Esophagus squamous epithelium (tissue), 5 donors: ENCODE measurements at regions of chr4 and their contacts with region 1.

Region 1: GRCh38 chr4:73258686-73259570 is at the start of gene ANKRD17:
- DNase-seq: peak; percentile 65
- H3K4me3 ChIP-seq: peak within 1 kb of the TSS; percentile 77 to 96 (median 90)
- H3K27ac ChIP-seq: peak within 1 kb of the TSS; percentile 95 to 99 (median 97)
- H3K4me1 ChIP-seq: peaks cover 6 to 55% (median 39%) of the 10 kb centered on the region in 3 donors
- H3K27me3 ChIP-seq: no peaks in the 10 kb centered on the region
- CTCF ChIP-seq: peak in 4 of 6 experiments; percentile 25 to 58 (median 44)
- POLR2A ChIP-seq: peak in 3 of 4 donors; percentile 49 to 85 (median 79)
- total RNA-seq, gene ANKRD17: 31.3 to 55.5 (median 47.5) TPM

Region 2: GRCh38 chr4:73069338-73070073 is 189.4 kb before region 1 on chr4 and contains the start of gene COX18:
- intact Hi-C with region 1: loop called (anchors 10 kb)
- DNase-seq: peak; percentile 81
- H3K4me3 ChIP-seq: peak within 1 kb of the TSS; percentile 57 to 98 (median 78)
- H3K27ac ChIP-seq: peak within 1 kb of the TSS; percentile 92 to 98 (median 96)
- H3K4me1 ChIP-seq: peaks cover 0 to 31% (median 5%) of the 10 kb centered on the region in 3 donors
- H3K27me3 ChIP-seq: no peaks in the 10 kb centered on the region
- CTCF ChIP-seq: peak in 1 of 6 experiments; percentile 8
- POLR2A ChIP-seq: peak in 3 of 4 donors; percentile 74 to 94 (median 86)
- total RNA-seq, gene COX18: 14.1 to 24.9 (median 17.6) TPM

Region 3: DNA sequence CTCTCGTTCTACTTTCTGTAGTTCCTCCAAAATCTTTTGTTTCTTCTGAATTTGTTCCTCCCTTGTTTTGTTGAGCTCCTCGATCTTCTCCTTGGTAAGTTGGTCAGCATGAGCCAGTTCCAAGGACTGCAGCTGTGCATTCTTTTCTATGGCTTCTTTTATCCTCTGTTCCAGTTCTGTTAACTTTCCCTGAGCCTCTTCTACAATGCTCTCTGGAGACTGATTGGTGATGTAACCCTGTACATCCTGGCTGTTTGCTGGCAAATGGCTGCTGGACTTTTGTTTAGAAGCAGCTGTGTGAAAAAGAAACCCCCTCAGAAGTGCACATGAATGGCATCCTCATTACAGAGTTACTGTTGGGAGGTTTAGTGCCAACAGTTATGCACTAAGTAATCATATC is 118.9 kb before region 1 on chr4:
- intact Hi-C with region 1: loop called (anchors 10 kb)
- DNase-seq: no peak
- H3K4me3 ChIP-seq: no peak overlapping the region
- H3K27ac ChIP-seq: no peak overlapping the region
- H3K4me1 ChIP-seq: peaks cover 0 to 8% (median 4%) of the 10 kb centered on the region in 3 donors
- H3K27me3 ChIP-seq: no peaks in the 10 kb centered on the region
- CTCF ChIP-seq: no peak
- POLR2A ChIP-seq: no peak

Region 4: DNA sequence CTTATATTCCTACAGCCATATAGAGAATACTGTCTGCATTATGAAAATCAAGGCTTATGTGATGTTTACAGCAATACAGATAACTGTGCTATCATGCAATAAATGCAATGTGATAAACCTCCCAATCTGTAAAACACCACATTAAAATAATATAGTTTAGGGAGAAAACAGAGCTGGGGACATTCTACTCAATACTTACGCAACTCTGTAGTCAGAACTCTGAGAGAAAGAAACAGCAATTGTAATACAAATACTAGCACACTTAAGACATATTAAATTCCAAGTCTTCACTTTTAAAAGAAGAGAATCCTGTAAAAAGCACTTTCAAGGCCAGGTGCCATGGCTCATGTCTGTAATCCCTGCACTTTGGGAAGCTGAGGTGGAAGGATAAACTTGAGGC is 61.7 kb before region 1 on chr4:
- intact Hi-C with region 1: no loop called
- DNase-seq: no peak
- H3K4me3 ChIP-seq: no peak overlapping the region
- H3K27ac ChIP-seq: no peak overlapping the region
- H3K4me1 ChIP-seq: peaks cover 0 to 22% (median 0%) of the 10 kb centered on the region in 3 donors
- H3K27me3 ChIP-seq: no peaks in the 10 kb centered on the region
- CTCF ChIP-seq: no peak
- POLR2A ChIP-seq: no peak